Activated T-helper 2 cell treated with anti-CD3 and anti-CD28 coated beads, Interferon-gamma antibody, Interleukin-2, Interleukin-4, amounts not matched to agents 10 μg/mL and 5 μg/mL and 100 μg/mL, durations not matched to agents 14 hours and 24 hours and 36 hours (primary cell): ENCODE measurements at regions of chr10 and their contacts with region 1.

Region 1: GRCh38 chr10:88810196-88810961 is 7.8 kb downstream of the LIPM start:
- DNase-seq: no peak
- H3K4me3 Mint-ChIP-seq: no peak overlapping the region
- H3K27ac Mint-ChIP-seq: no peak overlapping the region
- H3K4me1 Mint-ChIP-seq: peaks cover 28% of the 10 kb centered on the region
- H3K27me3 Mint-ChIP-seq: peaks cover 14% of the 10 kb centered on the region

Region 2: GRCh38 chr10:87794285-87794684 is 1016.1 kb before region 1 on chr10:
- intact Hi-C with region 1: no loop called
- DNase-seq: no peak
- H3K4me3 Mint-ChIP-seq: no peak overlapping the region
- H3K27ac Mint-ChIP-seq: no peak overlapping the region
- H3K4me1 Mint-ChIP-seq: peaks cover 19% of the 10 kb centered on the region
- H3K27me3 Mint-ChIP-seq: no peaks in the 10 kb centered on the region

Region 3: GRCh38 chr10:88687853-88688467 is 122.4 kb before region 1 on chr10:
- intact Hi-C with region 1: loop called (anchors 1 kb)
- DNase-seq: no peak
- H3K4me3 Mint-ChIP-seq: no peak overlapping the region
- H3K27ac Mint-ChIP-seq: no peak overlapping the region
- H3K4me1 Mint-ChIP-seq: no peaks in the 10 kb centered on the region
- H3K27me3 Mint-ChIP-seq: peaks cover 29% of the 10 kb centered on the region

Region 4: GRCh38 chr10:88728107-88728763 is 82.1 kb before region 1 on chr10:
- intact Hi-C with region 1: loop called (anchors 5 kb)
- DNase-seq: peak; percentile 37
- H3K4me3 Mint-ChIP-seq: no peak overlapping the region
- H3K27ac Mint-ChIP-seq: no peak overlapping the region
- H3K4me1 Mint-ChIP-seq: peaks cover 7% of the 10 kb centered on the region
- H3K27me3 Mint-ChIP-seq: peaks cover 29% of the 10 kb centered on the region

Region 5: GRCh38 chr10:88793747-88794299 is 16.6 kb before region 1 on chr10:
- intact Hi-C with region 1: no loop called
- DNase-seq: no peak
- H3K4me3 Mint-ChIP-seq: no peak overlapping the region
- H3K27ac Mint-ChIP-seq: peak overlapping the region; percentile 49
- H3K4me1 Mint-ChIP-seq: peaks cover 32% of the 10 kb centered on the region
- H3K27me3 Mint-ChIP-seq: peaks cover 27% of the 10 kb centered on the region

Region 6: DNA sequence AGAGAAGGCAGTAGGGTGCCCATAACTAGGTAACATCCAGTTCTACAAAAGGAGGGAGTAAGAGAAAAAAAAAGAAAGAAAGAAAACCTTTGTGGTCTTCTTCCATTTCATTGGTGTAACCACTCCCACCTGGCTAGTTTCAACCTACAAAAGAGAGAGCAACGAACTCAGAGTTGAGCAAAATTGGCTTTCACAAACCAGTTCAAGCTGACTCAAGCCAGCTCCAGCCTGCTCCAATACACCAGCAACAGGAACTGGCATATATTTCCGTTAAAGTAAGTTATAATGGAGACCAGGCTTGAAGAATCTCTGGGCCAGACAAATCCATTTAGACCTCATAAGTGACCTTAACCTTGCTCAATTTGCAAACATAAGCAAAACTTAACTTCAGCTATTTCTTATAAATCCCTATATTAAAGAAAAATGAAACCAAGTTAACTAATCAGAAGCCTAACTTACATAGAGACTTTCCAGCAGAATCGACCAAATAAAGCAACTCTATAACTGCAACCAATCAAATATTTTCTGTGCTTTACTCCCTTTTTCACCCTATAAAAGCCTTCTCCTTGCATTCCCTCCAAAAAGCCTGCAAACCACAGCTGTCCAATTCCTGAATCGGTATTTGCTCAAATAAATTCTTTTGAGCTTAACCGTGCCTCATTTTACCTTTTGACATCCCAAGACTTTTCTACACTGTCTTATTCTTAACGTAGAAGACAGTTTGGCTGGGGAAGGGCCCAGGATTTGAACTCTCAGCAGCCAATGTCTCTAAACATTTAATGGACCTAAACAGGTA is 31.1 kb after region 1 on chr10:
- intact Hi-C with region 1: no loop called
- DNase-seq: no peak
- H3K4me3 Mint-ChIP-seq: no peak overlapping the region
- H3K27ac Mint-ChIP-seq: no peak overlapping the region
- H3K4me1 Mint-ChIP-seq: peaks cover 23% of the 10 kb centered on the region
- H3K27me3 Mint-ChIP-seq: peaks cover 4% of the 10 kb centered on the region